Psoas muscle (tissue), 8 donors: ENCODE measurements at regions of chr12 and their contacts with region 1.

Region 1: DNA sequence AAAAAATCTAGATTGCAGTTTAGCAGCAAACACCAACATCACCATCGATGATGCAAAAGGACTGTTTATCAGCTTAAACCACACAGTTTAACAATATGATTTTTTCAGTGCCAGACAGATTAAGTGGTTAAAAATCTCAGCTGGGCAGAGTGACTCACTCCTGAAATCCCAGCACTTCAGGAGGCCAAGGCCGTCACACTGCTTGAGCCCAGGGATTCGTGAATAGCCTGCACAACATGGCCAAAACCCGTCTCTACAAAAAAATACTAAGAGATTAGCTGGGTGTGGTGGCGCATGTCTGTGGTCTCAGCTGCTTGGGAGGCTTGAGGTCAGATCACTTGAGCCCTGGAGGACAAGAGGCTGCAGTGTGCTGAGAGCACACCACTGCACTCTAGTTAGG is 8.9 kb downstream of the RSRC2 start:
- DNase-seq: no peak
- ATAC-seq: peak; percentile 57 to 76 (median 70)
- H3K4me3 ChIP-seq: no peak overlapping the region
- H3K27ac ChIP-seq: peak overlapping the region; percentile 46
- H3K4me1 ChIP-seq: peaks cover 21% of the 10 kb centered on the region
- H3K27me3 ChIP-seq: no peaks in the 10 kb centered on the region
- CTCF ChIP-seq: no peak

Region 2: GRCh38 chr12:121992059-121992879 is 525.6 kb before region 1 on chr12:
- intact Hi-C with region 1: no loop called
- DNase-seq: no peak
- ATAC-seq: peak in 2 of 4 donors; percentile 37 to 54
- H3K4me3 ChIP-seq: no peak overlapping the region
- H3K27ac ChIP-seq: no peak overlapping the region
- H3K4me1 ChIP-seq: no peaks in the 10 kb centered on the region
- H3K27me3 ChIP-seq: no peaks in the 10 kb centered on the region
- CTCF ChIP-seq: no peak

Region 3: GRCh38 chr12:123483602-123484248 is 965.8 kb after region 1 on chr12:
- intact Hi-C with region 1: no loop called
- DNase-seq: peak in 1 of 2 donors; percentile 45
- ATAC-seq: no peak
- H3K4me3 ChIP-seq: no peak overlapping the region
- H3K27ac ChIP-seq: peak overlapping the region; percentile 46
- H3K4me1 ChIP-seq: peaks cover 21% of the 10 kb centered on the region
- H3K27me3 ChIP-seq: no peaks in the 10 kb centered on the region
- CTCF ChIP-seq: no peak

Region 4: GRCh38 chr12:123621619-123622530 is 1104.0 kb after region 1 on chr12:
- intact Hi-C with region 1: loop called in 1 of 2 experiments (anchors 10 kb)
- DNase-seq: no peak
- ATAC-seq: peak in 2 of 4 donors; percentile 28 to 30
- H3K4me3 ChIP-seq: no peak overlapping the region
- H3K27ac ChIP-seq: no peak overlapping the region
- H3K4me1 ChIP-seq: no peaks in the 10 kb centered on the region
- H3K27me3 ChIP-seq: no peaks in the 10 kb centered on the region
- CTCF ChIP-seq: no peak